Activated CD8-positive, alpha-beta memory T cell treated with anti-CD3 and anti-CD28 coated beads, Interleukin-2, amount 10 ng/mL, durations not matched to agents 7 days and 5 days (primary cell): ENCODE measurements at regions of chr2 and their contacts with region 1.

Region 1: DNA sequence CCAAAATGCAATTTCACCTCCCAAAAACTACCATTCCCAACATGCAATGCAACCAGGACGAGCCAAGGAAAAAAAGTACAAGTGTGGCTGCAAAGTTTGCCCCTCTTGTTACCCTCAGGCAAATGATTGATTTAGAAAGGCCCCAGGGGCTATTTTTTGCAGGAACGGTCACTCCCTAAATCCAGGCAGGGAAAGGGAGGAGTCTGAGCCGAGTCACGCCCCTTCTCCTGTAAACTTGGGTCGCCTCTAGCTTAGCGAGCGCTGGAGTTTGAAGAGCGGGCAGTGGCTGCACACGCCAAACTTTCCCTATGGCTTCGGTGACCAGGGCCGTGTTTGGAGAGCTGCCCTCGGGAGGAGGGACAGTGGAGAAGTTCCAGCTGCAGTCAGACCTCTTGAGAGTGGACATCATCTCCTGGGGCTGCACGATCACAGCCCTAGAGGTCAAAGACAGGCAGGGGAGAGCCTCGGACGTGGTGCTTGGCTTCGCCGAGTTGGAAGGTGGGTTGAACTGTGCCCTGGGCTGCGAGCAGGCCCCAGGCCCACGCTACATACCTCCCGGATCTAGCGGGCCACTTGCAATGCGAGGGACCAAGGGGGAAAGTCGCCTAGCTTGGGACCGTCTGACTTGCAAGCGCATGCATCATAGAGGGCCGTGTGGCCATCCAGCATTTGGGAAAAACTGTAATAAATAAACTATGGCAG is at the start of gene GALM:
- DNase-seq: peak; percentile 80
- ATAC-seq: peak; percentile 41
- H3K4me3 Mint-ChIP-seq: peak within 1 kb of the TSS; percentile 74
- H3K27ac Mint-ChIP-seq: peak within 1 kb of the TSS; percentile 96
- H3K4me1 Mint-ChIP-seq: peaks cover 64% of the 10 kb centered on the region
- H3K27me3 Mint-ChIP-seq: no peaks in the 10 kb centered on the region
- total RNA-seq, gene GALM: 67.1 to 86.0 TPM

Region 2: DNA sequence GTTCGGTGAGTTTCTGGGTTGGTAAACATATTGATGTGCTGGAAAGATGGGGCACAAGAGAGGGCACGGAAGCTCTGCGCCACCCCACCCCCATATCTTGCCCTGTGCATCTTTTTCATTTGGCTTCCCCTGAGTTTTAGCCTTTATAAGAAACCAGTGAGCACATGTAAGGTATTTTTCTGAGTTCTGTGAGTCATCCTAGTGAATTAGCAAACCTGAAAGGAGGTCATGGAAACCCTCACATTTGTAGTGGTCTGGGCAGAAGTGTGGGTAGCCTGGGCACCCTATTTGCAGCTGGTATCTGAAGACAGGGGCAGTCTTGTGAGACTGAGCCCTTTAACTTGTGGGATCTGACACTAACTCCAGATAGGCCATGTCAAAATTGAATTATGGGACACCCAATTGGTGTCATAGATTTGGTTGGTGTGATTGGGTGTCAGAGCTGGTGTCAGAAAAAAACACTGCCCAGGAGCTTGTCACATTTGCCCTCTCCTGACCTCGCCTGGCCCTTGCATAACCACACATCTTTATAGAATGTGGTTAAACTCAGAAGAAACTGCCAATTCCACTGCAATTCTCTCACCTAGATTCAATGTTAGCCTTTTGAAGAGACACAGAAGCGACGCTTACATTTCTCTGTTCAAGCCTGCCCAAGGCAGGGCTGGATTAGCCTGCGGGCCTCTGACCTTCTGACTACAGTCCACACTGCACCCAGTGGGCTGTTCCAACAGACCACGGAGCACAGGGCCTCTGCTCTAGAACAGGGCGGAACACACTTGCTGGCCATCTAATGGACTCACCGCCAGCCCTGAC is 12.1 kb before region 1 on chr2:
- CTCF ChIA-PET with region 1: interaction called, 70 read pairs
- DNase-seq: peak; percentile 77
- ATAC-seq: peak; percentile 71
- H3K4me3 Mint-ChIP-seq: peak overlapping the region; percentile 55
- H3K27ac Mint-ChIP-seq: peak overlapping the region; percentile 94
- H3K4me1 Mint-ChIP-seq: peaks cover 69% of the 10 kb centered on the region
- H3K27me3 Mint-ChIP-seq: no peaks in the 10 kb centered on the region

Region 3: GRCh38 chr2:38685116-38685735 is 19.2 kb after region 1 on chr2:
- CTCF ChIA-PET with region 1: interaction called, 20 read pairs
- DNase-seq: no peak
- ATAC-seq: no peak
- H3K4me3 Mint-ChIP-seq: no peak overlapping the region
- H3K27ac Mint-ChIP-seq: peak overlapping the region; percentile 33
- H3K4me1 Mint-ChIP-seq: peaks cover 61% of the 10 kb centered on the region
- H3K27me3 Mint-ChIP-seq: no peaks in the 10 kb centered on the region

Region 4: GRCh38 chr2:38815614-38816479 is 149.8 kb after region 1 on chr2:
- CTCF ChIA-PET with region 1: no interaction called
- DNase-seq: no peak
- ATAC-seq: no peak
- H3K4me3 Mint-ChIP-seq: no peak overlapping the region
- H3K27ac Mint-ChIP-seq: no peak overlapping the region
- H3K4me1 Mint-ChIP-seq: no peaks in the 10 kb centered on the region
- H3K27me3 Mint-ChIP-seq: no peaks in the 10 kb centered on the region